Dendritic cell treated with granulocyte-macrophage colony-stimulating factor and Interleukin-4, amounts not matched to agents 40 ng/mL and 50 ng/mL, for 4 days (primary cell): ENCODE measurements at regions of chr12 and their contacts with region 1.

Region 1: GRCh38 chr12:94147991-94148740 is at the start of gene PLXNC1:
- H3K4me3 Mint-ChIP-seq: peak within 1 kb of the TSS; percentile 80
- H3K27ac Mint-ChIP-seq: peak within 1 kb of the TSS; percentile 44
- H3K4me1 Mint-ChIP-seq: peaks cover 25% of the 10 kb centered on the region
- H3K27me3 Mint-ChIP-seq: peaks cover 49% of the 10 kb centered on the region

Region 2: DNA sequence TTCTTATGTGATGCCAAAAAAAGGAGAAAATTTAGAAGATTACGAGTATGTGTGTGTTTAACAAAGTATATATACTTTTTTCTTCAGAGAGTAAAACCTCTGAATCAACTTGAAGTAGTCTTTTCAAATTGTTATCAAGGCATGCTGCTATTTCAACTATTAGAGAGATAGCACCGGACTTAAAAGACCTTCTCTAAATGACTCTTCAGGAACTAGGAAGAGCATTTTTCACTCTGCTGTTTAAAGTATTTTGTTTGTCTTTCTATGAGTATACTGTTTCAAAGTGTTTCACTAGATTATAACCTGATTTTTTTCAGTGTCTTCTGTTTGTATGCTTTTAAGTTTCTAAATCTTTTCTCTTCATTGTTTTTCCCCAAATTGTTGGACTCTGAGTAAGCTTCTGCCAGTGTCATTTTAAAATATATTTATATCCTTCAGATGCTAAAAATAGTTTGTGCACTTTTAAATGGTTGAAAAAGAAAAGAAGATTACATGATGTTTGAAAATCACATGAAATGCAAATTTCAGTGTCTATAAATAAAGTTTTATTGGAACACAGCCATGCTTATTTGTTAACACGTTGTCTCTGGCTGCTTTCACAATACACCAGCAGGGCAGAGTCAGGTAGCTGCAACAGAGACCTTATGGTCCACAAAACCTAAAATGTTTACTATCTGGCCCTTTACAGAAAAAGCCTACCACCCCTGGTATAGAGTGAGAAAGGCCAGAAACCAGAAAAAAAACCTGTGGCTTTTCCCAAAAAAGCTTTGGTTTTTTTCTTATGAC is 449.7 kb before region 1 on chr12:
- intact Hi-C with region 1: no loop called
- H3K4me3 Mint-ChIP-seq: no peak overlapping the region
- H3K27ac Mint-ChIP-seq: no peak overlapping the region
- H3K4me1 Mint-ChIP-seq: no peaks in the 10 kb centered on the region
- H3K27me3 Mint-ChIP-seq: no peaks in the 10 kb centered on the region

Region 3: GRCh38 chr12:93946542-93947150 is 201.5 kb before region 1 on chr12:
- intact Hi-C with region 1: no loop called
- H3K4me3 Mint-ChIP-seq: no peak overlapping the region
- H3K27ac Mint-ChIP-seq: no peak overlapping the region
- H3K4me1 Mint-ChIP-seq: no peaks in the 10 kb centered on the region
- H3K27me3 Mint-ChIP-seq: peaks cover 3% of the 10 kb centered on the region

Region 4: DNA sequence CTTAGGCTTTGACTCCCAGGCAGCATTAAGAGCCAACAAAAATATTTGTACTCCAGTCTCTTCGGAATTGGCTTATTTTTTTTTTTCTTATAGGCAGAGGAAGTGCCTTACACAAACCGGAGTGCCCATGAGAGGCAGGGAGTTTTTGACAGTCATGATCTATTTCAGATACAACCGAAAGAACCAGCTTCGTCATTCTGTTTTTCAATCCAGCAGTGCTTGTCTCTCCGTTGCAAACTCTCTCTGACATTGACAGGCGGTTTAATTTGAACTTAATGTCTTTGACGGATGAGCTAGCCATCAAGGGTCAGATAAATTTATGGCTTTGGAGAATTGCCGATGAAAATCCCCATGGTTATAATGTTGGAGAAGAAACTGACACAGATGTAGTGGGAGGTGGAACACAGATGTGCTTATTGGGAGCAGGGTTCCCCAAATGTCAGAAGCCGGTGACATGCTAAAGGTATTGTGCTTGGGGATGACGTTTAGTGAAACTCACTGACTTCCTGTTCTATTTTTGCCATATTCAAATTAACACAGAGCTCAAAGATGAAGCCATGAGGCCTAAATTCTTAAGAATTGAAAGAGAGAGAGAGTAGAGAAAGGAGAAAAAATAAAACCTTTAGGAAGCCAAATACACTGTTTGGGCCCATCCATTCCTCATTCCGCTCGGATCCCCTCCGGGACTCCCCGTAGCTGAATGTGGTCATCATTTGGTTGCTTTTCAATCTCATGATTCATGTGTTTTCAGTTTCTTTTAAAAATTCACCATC is 59.9 kb after region 1 on chr12:
- intact Hi-C with region 1: loop called (anchors 10 kb)
- H3K4me3 Mint-ChIP-seq: peak overlapping the region; percentile 65
- H3K27ac Mint-ChIP-seq: peak overlapping the region; percentile 84
- H3K4me1 Mint-ChIP-seq: peaks cover 32% of the 10 kb centered on the region
- H3K27me3 Mint-ChIP-seq: no peaks in the 10 kb centered on the region

Region 5: GRCh38 chr12:94262228-94263010 is 114.3 kb after region 1 on chr12:
- intact Hi-C with region 1: loop called (anchors 10 kb)
- H3K4me3 Mint-ChIP-seq: peak overlapping the region; percentile 73
- H3K27ac Mint-ChIP-seq: peak overlapping the region; percentile 89
- H3K4me1 Mint-ChIP-seq: peaks cover 51% of the 10 kb centered on the region
- H3K27me3 Mint-ChIP-seq: no peaks in the 10 kb centered on the region

Region 6: DNA sequence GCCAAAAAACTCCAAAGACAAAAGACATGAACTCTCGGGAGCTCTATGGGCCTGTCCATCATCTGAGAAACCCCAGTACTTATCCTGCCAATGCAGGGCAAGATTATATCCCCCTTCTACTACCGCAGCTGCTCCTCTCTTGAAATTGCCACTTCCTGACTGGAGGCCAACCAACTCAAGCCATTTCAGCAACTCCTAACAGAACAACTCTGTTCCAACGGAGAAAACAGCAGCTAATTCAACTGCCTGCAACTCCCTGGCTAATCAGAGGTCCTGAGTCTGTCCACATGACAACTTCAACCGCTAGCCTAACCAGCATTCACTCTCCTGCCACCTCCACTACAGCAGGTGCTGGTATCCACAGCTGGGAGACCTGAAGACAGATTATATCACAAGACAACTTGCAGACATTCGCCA is 287.4 kb after region 1 on chr12:
- intact Hi-C with region 1: loop called (anchors 2 kb)
- H3K4me3 Mint-ChIP-seq: no peak overlapping the region
- H3K27ac Mint-ChIP-seq: no peak overlapping the region
- H3K4me1 Mint-ChIP-seq: peaks cover 10% of the 10 kb centered on the region
- H3K27me3 Mint-ChIP-seq: no peaks in the 10 kb centered on the region

Region 7: DNA sequence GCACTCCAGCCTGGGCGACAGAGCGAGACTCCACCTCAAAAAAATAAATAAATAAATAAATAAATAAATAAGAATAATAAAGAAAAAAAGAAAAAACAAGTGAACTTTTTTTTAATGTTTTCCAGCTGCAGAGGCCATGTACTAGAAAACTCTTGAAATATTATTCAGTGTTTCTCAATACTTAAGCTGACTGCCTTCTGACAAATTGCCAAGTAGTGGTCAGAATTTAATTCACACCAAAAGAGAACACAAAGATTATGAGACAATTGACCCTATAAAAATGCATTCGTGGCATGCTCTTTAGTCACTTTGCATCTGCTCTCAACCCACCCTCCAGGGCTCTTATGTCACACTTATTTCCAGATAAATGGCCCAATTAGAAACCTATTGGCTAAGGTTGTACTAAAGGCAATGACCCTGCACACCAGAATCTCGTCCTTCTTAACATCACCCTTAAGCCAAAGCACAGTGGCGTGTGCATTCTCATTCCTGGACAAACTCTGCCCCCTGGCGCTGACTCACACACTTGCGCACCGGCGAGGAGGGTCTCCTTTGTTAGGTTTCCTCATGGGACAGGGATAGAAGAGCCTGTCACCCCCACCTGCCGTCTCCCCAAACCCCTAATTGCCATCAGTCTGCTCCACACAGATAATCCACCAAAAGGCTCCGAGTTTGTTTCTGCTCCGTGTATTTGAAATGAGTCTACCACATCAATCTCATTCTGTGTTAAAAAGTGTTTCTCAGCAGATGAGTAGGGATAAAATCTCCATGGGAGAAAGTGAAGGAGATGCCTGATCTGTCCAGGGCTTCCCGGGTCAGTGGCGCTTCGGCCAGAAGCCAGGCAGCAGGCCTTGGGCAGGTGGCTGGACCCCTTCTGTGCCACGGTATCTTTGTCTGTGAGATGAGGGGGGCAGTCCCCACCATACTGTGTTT is 384.6 kb after region 1 on chr12:
- intact Hi-C with region 1: loop called (anchors 1 kb)
- H3K4me3 Mint-ChIP-seq: no peak overlapping the region
- H3K27ac Mint-ChIP-seq: no peak overlapping the region
- H3K4me1 Mint-ChIP-seq: peaks cover 11% of the 10 kb centered on the region
- H3K27me3 Mint-ChIP-seq: peaks cover 6% of the 10 kb centered on the region